Mammary epithelial cell (primary cell): ENCODE measurements at regions of chr4 and their contacts with region 1.

Region 1: DNA sequence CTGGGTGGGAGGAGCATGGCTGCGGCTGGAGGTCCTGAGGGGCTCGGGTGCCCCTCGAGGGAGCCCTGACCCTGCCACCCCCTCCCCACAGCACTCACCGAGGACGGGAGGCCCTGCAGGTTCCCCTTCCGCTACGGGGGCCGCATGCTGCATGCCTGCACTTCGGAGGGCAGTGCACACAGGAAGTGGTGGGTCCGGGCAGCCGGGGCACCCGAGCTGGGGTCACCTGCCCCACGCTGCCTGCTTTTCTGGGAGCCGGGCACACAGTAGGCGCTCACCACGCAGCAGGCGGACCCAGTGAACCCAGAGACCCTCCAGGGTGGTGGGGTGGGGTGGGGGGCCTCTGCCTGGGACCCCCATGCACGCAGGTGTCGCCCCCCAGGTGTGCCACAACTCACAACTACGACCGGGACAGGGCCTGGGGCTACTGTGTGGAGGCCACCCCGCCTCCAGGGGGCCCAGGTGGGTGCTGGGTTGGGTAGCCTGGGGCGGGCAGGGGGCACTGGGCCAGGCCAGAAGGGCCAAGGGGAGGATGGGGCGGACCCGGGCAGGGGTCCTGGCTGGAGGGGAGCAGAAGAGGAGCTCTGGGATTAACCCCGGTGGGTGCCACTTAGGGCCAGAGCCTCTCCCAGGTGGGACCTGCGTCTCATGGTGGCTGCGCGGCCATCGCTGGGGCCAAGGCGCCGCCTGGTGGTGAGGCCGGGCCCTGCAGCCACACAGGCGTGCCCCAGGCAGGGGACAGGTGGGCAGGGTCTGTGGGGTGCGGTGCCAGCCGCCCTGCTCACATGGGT is 1.4 kb downstream of the HGFAC start:
- DNase-seq: peak; percentile 32
- H3K4me3 ChIP-seq: no peak overlapping the region
- H3K27ac ChIP-seq: no peak overlapping the region
- H3K4me1 ChIP-seq: no peaks in the 10 kb centered on the region
- H3K27me3 ChIP-seq: no peaks in the 10 kb centered on the region
- CTCF ChIP-seq: peak; percentile 94 to 95

Region 2: DNA sequence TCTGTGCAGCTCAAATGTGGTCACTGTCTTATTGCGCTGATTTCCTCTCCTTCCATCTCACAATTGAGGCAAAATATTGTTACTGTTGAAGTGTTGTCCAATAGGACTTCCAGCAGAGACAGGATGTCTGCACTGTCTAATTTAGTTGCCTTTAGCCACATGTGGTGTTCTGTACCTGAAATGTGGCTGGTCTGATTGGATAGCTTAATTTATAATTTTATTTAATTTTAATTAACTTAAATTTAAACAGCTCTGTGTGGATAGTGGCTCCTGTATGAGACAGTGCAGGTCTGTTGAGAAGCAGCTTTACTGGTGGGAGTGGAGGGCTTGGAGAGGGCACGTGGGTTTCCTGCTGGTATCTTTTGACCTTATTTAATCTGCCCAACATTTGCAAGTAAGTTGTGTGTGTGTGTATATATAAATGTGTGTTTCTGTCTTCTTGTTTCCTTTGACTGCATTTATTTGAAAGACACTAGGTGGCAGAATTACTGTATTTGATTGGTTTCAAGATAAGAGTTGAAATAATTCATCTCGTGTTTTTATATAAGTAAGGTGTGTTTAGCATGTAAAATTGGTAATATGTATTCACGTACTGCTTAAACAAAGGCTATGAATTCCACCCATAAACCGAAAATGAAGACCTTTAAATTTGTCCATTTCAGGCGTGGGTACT is 249.5 kb before region 1 on chr4:
- CTCF ChIA-PET with region 1: no interaction called
- dilution Hi-C with region 1: no loop called
- in situ Hi-C with region 1: no loop called
- intact Hi-C with region 1: loop called (anchors 1 kb)
- DNase-seq: no peak
- H3K4me3 ChIP-seq: no peak overlapping the region
- H3K27ac ChIP-seq: no peak overlapping the region
- H3K4me1 ChIP-seq: peaks cover 7% of the 10 kb centered on the region
- H3K27me3 ChIP-seq: no peaks in the 10 kb centered on the region
- CTCF ChIP-seq: peak; percentile 25 to 43

Region 3: GRCh38 chr4:3363411-3364141 is 79.6 kb before region 1 on chr4:
- CTCF ChIA-PET with region 1: no interaction called
- dilution Hi-C with region 1: loop called (anchors 5 kb)
- in situ Hi-C with region 1: loop called in 1 of 2 experiments (anchors 10 kb)
- intact Hi-C with region 1: no loop called
- DNase-seq: no peak
- H3K4me3 ChIP-seq: no peak overlapping the region
- H3K27ac ChIP-seq: no peak overlapping the region
- H3K4me1 ChIP-seq: no peaks in the 10 kb centered on the region
- H3K27me3 ChIP-seq: no peaks in the 10 kb centered on the region
- CTCF ChIP-seq: no peak

Region 4: GRCh38 chr4:3461478-3462291 is 18.5 kb after region 1 on chr4:
- CTCF ChIA-PET with region 1: no interaction called
- dilution Hi-C with region 1: no loop called
- in situ Hi-C with region 1: no loop called
- intact Hi-C with region 1: loop called (anchors 1 kb)
- DNase-seq: peak; percentile 76
- H3K4me3 ChIP-seq: no peak overlapping the region
- H3K27ac ChIP-seq: no peak overlapping the region
- H3K4me1 ChIP-seq: peaks cover 24% of the 10 kb centered on the region
- H3K27me3 ChIP-seq: no peaks in the 10 kb centered on the region
- CTCF ChIP-seq: no peak